Panc1 (cell line): ENCODE measurements at regions of chr11 and their contacts with region 1.

Region 1: DNA sequence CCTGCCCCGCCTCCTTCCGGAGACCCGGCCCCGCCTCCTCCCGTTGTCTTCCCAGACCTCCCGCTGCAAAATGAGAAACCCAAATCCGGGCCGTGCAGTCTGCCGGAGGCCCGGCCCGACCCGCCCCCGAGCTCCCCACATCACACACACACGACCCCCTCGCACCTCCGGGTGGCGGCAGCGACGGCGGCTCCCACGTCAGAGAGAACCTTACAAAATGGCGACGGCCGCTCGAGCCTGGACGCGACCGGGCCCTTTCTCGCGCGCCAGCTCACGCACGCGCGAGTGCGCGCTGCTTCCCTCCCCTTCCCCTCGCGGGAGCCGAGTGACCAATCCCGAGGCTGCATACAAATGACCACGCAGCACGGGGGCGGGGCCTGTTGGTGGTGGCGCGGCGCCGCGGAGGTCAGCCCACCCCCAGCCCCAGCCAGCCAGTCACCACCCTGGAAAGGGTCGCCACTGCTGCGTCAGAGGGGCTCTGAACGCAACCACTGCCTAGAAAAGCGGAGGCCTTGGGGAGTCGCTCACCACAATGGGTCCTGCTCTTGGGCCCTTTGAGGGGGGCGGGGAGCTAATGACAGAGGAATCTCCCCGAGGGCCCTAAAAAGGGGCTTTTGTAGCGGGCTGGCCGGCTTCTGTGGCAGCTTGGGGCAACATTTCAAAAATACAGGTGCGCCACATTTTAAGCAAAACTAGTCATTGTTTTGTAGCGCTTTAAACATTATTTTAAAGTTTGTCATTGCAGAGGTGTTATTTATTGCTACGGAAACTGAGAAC is at the start of gene RBM4B:
- DNase-seq: peak; percentile 77
- ATAC-seq: peak; percentile 98
- H3K4me3 ChIP-seq: peak within 1 kb of the TSS; percentile 64 to 92
- H3K27ac ChIP-seq: peak within 1 kb of the TSS; percentile 91
- H3K4me1 ChIP-seq: peaks cover 20% of the 10 kb centered on the region
- H3K27me3 ChIP-seq: no peaks in the 10 kb centered on the region
- CTCF ChIP-seq: no peak
- total RNA-seq, gene RBM4B: 33.6 TPM

Region 2: GRCh38 chr11:66579017-66579606 is 98.7 kb before region 1 on chr11:
- CTCF ChIA-PET with region 1: interaction called, 7 read pairs
- POLR2A ChIA-PET with region 1: no interaction called
- in situ Hi-C with region 1: no loop called
- intact Hi-C with region 1: loop called (anchors 10 kb)
- DNase-seq: no peak
- ATAC-seq: peak; percentile 89
- H3K4me3 ChIP-seq: no peak overlapping the region
- H3K27ac ChIP-seq: no peak overlapping the region
- H3K4me1 ChIP-seq: no peaks in the 10 kb centered on the region
- H3K27me3 ChIP-seq: no peaks in the 10 kb centered on the region
- CTCF ChIP-seq: peak; percentile 93

Region 3: GRCh38 chr11:66624087-66624849 is 53.5 kb before region 1 on chr11:
- CTCF ChIA-PET with region 1: no interaction called
- POLR2A ChIA-PET with region 1: interaction called, 5 read pairs
- in situ Hi-C with region 1: loop called (anchors 5 kb)
- intact Hi-C with region 1: no loop called
- DNase-seq: no peak
- ATAC-seq: no peak
- H3K4me3 ChIP-seq: no peak overlapping the region
- H3K27ac ChIP-seq: no peak overlapping the region
- H3K4me1 ChIP-seq: peaks cover 20% of the 10 kb centered on the region
- H3K27me3 ChIP-seq: no peaks in the 10 kb centered on the region
- CTCF ChIP-seq: no peak

Region 4: DNA sequence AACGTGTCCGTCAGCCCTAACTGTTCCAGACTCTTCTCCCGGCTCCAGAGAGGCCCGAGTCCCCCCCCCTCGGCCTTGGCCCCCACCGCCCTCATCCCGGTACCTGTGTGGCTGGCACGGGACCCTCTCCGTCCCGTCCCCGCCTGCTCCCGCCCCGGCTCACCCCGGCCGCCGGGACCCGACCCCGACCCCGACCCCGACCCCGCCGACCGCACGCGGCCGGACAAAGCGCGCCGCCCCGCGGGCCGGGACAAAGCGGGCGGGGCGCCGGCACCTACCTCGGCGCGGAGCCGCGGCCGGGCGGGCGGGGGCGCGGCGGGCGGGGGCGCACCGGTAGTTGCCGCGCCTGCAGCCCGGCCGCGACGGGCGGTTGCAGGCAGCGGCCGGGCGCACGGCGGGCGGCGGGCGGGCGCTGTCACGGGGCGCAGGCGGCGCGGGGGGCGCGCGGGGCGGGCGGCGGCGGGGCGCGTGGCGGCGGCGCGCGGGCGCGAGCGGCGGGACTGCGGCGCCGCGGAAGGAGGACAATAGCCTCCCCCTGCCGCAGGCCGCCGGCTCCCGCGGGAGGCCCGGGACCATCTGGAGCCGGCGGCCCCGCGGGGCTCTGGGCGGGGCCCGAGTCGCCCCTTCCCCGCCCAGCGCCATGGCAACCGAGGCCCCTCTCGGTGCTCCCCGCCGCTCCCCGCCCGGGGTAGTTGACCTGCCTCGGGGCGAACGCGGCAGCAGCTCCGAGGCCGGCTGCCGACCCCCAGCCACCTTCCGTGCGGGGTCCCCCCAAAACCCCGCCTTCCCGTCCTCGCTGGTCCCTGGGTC is 50.3 kb after region 1 on chr11:
- CTCF ChIA-PET with region 1: no interaction called
- POLR2A ChIA-PET with region 1: interaction called, 12 read pairs
- in situ Hi-C with region 1: no loop called
- intact Hi-C with region 1: no loop called
- DNase-seq: no peak
- ATAC-seq: peak; percentile 58
- H3K4me3 ChIP-seq: peak overlapping the region; percentile 44 to 53
- H3K27ac ChIP-seq: no peak overlapping the region
- H3K4me1 ChIP-seq: peaks cover 6% of the 10 kb centered on the region; the same call in 1 of the 2 replicates
- H3K27me3 ChIP-seq: peaks cover 35% of the 10 kb centered on the region
- CTCF ChIP-seq: no peak